ENCODE measurements at regions of chr14 and their contacts with region 1.

Region 1: DNA sequence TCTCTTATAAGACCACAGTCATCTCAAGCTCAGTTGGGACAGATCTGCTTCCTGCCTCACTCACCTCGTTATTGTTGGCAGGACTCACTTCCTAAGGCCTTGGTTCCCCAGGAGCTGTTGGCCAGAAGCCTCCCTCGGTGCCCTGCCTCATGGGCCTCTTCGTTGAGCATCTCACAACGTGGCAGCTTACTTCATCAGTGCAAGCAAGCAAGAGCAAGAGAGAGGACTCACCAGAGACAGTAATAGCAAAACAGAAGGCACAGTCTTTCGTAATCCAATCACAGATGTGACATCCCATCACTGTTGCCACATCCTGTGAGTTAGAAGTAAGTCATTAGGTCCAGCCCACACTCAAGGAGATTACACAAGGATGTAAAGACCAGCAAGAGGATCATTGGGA is 5.1 kb upstream of the NUMB start:
- DNase-seq: peak in 1 of 4 experiments; percentile 24
- ATAC-seq: no peak
- H3K4me3 ChIP-seq: no peak overlapping the region
- H3K27ac ChIP-seq: no peak overlapping the region
- H3K4me1 ChIP-seq: peaks cover 18 to 67% of the 10 kb centered on the region in 2 experiments
- H3K27me3 ChIP-seq: no peaks in the 10 kb centered on the region
- CTCF ChIP-seq: no peak
- EP300 ChIP-seq: no peak
- POLR2A ChIP-seq: no peak
- RAD21 ChIP-seq: no peak

Region 2: GRCh38 chr14:72926292-72927028 is 537.0 kb before region 1 on chr14 and contains the start of gene DCAF4:
- CTCF ChIA-PET with region 1: no interaction called
- POLR2A ChIA-PET with region 1: no interaction called
- in situ Hi-C with region 1: no loop called
- intact Hi-C with region 1: loop called (anchors 10 kb)
- DNase-seq: peak; percentile 69 to 97 (median 82)
- ATAC-seq: peak; percentile 94
- H3K4me3 ChIP-seq: peak within 1 kb of the TSS; percentile 90
- H3K27ac ChIP-seq: peak within 1 kb of the TSS; percentile 98
- H3K4me1 ChIP-seq: peaks cover 21 to 49% of the 10 kb centered on the region in 2 experiments
- H3K27me3 ChIP-seq: no peaks in the 10 kb centered on the region
- CTCF ChIP-seq: no peak
- EP300 ChIP-seq: no peak
- POLR2A ChIP-seq: peak; percentile 55
- RAD21 ChIP-seq: no peak
- polyA plus RNA-seq, gene DCAF4: 2.7 to 3.8 TPM

Region 3: GRCh38 chr14:73295198-73295796 is 168.1 kb before region 1 on chr14:
- CTCF ChIA-PET with region 1: no interaction called
- POLR2A ChIA-PET with region 1: interaction called, 4 read pairs
- in situ Hi-C with region 1: loop called (anchors 5 kb)
- intact Hi-C with region 1: no loop called
- DNase-seq: peak; percentile 10 to 32 (median 14)
- ATAC-seq: peak; percentile 67; the same call in 2 of the 3 replicates
- H3K4me3 ChIP-seq: no peak overlapping the region
- H3K27ac ChIP-seq: no peak overlapping the region
- H3K4me1 ChIP-seq: no peaks in the 10 kb centered on the region
- H3K27me3 ChIP-seq: no peaks in the 10 kb centered on the region
- CTCF ChIP-seq: peak; percentile 37 to 65 (median 46); a peak in 4 of 6 replicates
- EP300 ChIP-seq: no peak
- POLR2A ChIP-seq: no peak
- RAD21 ChIP-seq: peak; percentile 36 to 72

Region 4: GRCh38 chr14:74038015-74038859 is 574.8 kb after region 1 on chr14:
- CTCF ChIA-PET with region 1: no interaction called
- POLR2A ChIA-PET with region 1: no interaction called
- in situ Hi-C with region 1: no loop called
- intact Hi-C with region 1: no loop called
- DNase-seq: peak; percentile 25 to 62 (median 29)
- ATAC-seq: peak; percentile 81
- H3K4me3 ChIP-seq: no peak overlapping the region
- H3K27ac ChIP-seq: no peak overlapping the region
- H3K4me1 ChIP-seq: 0 out of 5 replicates have a peak, but pooled peaks cover 0 to 2% of the 10 kb centered on the region in 2 experiments
- H3K27me3 ChIP-seq: no peaks in the 10 kb centered on the region
- CTCF ChIP-seq: peak; percentile 17 to 59 (median 38); a peak in 5 of 6 replicates
- EP300 ChIP-seq: no peak
- POLR2A ChIP-seq: no peak
- RAD21 ChIP-seq: peak; percentile 60 to 71

Measured in K562 (cell line).